ENCODE measurements at regions of chr14 and their contacts with region 1.

Region 1: DNA sequence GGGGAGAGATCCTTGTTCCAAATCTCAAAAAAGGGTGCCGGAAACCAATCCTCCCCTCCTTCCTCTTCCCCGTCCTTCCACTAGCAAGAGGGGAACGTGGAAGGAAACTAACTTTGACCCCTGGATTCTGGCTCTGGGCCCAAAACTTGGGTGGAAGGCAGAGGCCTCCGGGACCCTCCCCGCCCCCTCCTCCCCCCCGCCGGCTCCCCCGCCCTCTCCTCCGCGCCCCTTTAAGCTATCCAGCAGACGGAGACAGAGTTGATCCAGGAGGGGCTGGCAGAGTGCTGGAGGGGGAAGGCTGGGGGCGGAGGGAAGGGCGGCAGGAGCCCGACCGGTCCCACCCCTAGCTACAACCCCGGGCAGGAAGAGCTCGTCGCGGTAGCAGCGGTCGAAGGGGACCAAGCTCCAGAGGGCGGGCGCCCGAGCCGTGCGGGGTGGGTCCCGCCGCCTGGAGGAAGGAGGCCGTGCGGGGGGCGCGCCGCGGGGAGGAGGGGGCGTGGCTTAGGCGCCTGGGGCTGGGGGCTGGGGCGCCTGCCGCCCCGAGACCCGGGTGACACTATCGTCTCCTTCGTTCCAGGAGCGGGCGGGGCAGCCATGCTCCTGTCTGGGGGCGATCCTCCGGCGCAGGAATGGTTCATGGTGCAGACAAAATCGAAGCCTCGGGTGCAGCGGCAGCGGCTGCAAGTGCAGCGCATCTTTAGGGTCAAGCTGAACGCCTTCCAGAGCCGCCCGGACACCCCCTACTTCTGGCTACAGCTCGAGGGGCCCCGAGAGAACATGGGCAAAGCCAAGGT is at the start of gene NYNRIN:
- DNase-seq: peak; percentile 45 to 82 (median 76)
- H3K4me3 ChIP-seq: peak within 1 kb of the TSS; percentile 42 to 84 (median 68)
- H3K27ac ChIP-seq: peak within 1 kb of the TSS in 1 of 2 experiments; percentile 20
- H3K4me1 ChIP-seq: peaks cover 12 to 75% (median 58%) of the 10 kb centered on the region in 4 experiments
- H3K27me3 ChIP-seq: no peaks in the 10 kb centered on the region

Region 2: DNA sequence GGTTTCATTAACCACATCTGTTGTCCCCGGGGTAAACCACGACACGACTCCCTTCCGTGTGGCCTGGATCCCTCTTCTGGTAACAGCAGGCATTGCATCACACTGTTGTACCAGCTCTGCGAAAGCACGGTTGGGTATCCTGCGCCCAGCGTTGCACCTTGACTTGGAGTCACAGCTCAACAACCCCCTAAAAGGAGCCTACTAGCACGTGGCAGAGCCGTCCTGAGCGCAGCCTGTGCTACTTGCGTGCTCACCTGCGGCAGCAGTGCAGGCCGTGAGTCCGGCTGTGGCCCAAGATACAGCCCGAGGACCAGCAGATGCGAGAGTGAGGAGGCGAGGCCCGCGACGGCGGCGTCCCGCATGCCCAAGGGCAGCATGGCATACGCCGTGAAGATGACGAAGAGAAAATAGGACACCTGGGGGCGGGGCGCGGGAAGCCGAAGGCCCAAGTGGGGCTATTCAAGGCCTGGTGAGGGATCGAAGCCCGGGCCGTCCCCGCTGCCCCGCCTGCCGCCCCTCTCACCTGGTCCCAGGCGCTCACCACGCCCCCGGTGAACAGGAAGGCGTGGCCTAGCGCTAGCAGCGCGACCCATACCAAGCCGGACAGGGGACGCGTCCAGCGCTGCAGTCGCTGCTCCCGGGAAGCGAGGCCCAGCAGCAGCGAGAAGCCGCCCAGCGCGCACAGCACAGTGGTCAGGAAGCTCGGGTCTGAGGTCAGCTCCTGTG is 66.4 kb before region 1 on chr14:
- CTCF ChIA-PET with region 1: interaction called, 19 read pairs
- POLR2A ChIA-PET with region 1: interaction called, 4 read pairs
- DNase-seq: peak; percentile 89 to 95 (median 94)
- H3K4me3 ChIP-seq: peak overlapping the region in 6 of 7 experiments; percentile 19 to 63 (median 30)
- H3K27ac ChIP-seq: no peak overlapping the region
- H3K4me1 ChIP-seq: peaks cover 15 to 71% (median 68%) of the 10 kb centered on the region in 4 experiments
- H3K27me3 ChIP-seq: peaks cover 0 to 34% (median 10%) of the 10 kb centered on the region in 5 experiments

Region 3: GRCh38 chr14:24372701-24373416 is 26.0 kb before region 1 on chr14:
- CTCF ChIA-PET with region 1: interaction called, 55 read pairs
- POLR2A ChIA-PET with region 1: interaction called, 4 read pairs
- DNase-seq: no peak
- H3K4me3 ChIP-seq: no peak overlapping the region
- H3K27ac ChIP-seq: no peak overlapping the region
- H3K4me1 ChIP-seq: peaks cover 0 to 31% (median 23%) of the 10 kb centered on the region in 4 experiments
- H3K27me3 ChIP-seq: peaks cover 0 to 4% (median 0%) of the 10 kb centered on the region in 5 experiments

Region 4: GRCh38 chr14:24411443-24412389 is 12.9 kb after region 1 on chr14:
- CTCF ChIA-PET with region 1: interaction called, 72 read pairs
- POLR2A ChIA-PET with region 1: no interaction called
- DNase-seq: peak; percentile 64 to 78 (median 76)
- H3K4me3 ChIP-seq: no peak overlapping the region
- H3K27ac ChIP-seq: no peak overlapping the region
- H3K4me1 ChIP-seq: no peaks in the 10 kb centered on the region
- H3K27me3 ChIP-seq: no peaks in the 10 kb centered on the region

Region 5: GRCh38 chr14:24425704-24426103 is 26.9 kb after region 1 on chr14:
- CTCF ChIA-PET with region 1: interaction called, 489 read pairs
- POLR2A ChIA-PET with region 1: interaction called, 6 read pairs
- DNase-seq: peak in 2 of 3 donors; percentile 40 to 47
- H3K4me3 ChIP-seq: no peak overlapping the region
- H3K27ac ChIP-seq: no peak overlapping the region
- H3K4me1 ChIP-seq: peaks cover 24 to 75% (median 63%) of the 10 kb centered on the region in 4 experiments
- H3K27me3 ChIP-seq: peaks cover 0 to 3% (median 0%) of the 10 kb centered on the region in 5 experiments

Region 6: DNA sequence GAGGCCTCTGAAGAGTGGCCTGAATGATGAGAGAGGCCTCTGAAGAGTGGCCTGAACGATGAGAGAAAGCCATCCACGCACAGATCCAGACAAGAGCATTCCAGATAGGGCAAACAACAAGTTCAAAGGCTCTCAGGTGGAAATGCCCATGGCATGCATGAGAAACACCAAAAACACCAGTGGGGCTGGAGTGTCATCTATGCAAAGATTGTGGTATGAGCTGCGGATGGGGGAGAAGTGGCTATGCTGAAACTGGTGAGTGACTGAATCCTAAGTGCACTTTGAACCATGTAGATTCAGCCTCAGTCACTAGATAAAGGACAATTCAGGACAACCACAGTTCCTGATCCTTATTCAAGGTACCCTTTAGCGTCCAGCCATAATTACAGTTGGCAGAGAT is 314.6 kb after region 1 on chr14:
- CTCF ChIA-PET with region 1: no interaction called
- POLR2A ChIA-PET with region 1: no interaction called
- DNase-seq: no peak
- H3K4me3 ChIP-seq: no peak overlapping the region
- H3K27ac ChIP-seq: no peak overlapping the region
- H3K4me1 ChIP-seq: no peaks in the 10 kb centered on the region
- H3K27me3 ChIP-seq: peaks cover 0 to 2% (median 0%) of the 10 kb centered on the region in 5 experiments

Measured in common myeloid progenitor, CD34-positive (primary cell).